ENCODE measurements at regions of chr5 and their contacts with region 1.

Region 1: DNA sequence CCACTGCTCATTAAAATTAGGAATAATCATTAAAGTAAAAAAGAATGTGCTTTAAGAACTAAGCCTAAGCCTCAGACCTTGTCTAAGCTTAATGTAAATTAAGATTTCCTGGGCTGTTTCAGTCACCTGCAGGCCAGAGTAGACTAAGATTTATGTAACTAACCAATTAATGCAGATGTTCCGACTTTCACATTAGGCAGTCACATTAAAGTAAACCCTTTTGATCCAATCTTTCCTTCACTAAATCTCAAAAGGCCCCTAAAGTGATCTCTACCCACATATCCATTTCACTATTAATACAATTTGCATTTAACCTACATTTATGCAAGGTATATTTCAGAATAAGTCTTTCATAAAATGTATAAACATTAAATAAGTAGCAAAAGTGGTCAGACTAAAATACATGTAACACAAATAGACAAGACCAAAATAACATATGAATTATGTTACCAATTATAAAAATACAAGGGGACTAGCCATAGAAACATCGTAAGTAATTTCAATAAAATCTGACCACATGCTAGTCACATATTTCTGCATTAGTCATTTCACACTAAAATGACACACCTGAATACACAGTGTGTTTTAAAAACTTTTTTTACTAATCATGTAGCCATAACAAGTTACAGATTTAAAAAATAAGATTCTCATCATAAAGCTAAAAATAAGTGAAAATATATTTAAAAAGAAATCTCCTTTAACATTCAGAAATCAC is 7.7 kb downstream of the NR3C1 start:
- DNase-seq: no peak
- ATAC-seq: no peak
- H3K4me3 ChIP-seq: peak overlapping the region in 2 of 5 experiments; percentile 12 to 32
- H3K4me3 Mint-ChIP-seq: peak overlapping the region; percentile 88
- H3K27ac ChIP-seq: peak overlapping the region in 1 of 2 donors; percentile 4
- H3K27ac Mint-ChIP-seq: no peak overlapping the region
- H3K4me1 ChIP-seq: peaks cover 24 to 79% of the 10 kb centered on the region in 2 donors
- H3K4me1 Mint-ChIP-seq: peaks cover 61% of the 10 kb centered on the region
- H3K27me3 ChIP-seq: no peaks in the 10 kb centered on the region
- H3K27me3 Mint-ChIP-seq: no peaks in the 10 kb centered on the region
- CTCF ChIP-seq: no peak

Region 2: DNA sequence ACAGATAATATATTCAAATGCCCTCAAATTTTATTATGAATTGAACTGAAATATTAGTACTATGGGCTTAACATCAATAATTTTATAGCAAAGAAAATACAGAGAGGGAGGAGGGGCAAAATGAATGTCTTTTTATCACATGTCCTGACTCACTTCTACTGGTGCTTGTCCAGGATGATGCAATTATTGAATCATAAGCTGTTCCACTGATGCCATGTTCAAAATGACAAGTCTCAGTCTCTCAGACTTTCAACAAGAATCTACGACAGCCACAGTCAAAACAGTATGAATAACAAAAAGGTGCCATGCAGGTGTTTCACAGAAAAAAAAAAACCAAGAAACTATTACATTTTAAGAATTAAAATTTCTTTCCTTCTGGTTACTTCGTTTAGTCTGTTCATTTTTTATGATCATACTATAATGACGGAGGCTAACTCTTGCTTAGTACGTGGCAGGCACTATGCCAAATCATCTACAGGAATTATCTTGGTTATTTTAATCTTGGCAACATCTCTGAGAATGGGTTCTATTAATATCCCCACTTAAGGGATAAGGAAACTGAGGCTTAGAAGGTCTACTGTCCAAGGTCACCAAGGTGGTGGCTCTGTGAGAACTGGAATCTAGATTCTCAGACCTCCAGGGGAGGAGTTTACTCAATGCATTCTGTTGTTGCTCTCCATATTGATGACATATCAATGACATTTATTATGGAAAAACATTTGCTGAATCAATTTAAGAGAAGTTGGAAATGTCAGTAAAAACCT is 53.8 kb before region 1 on chr5:
- CTCF ChIA-PET with region 1: no interaction called
- POLR2A ChIA-PET with region 1: no interaction called
- intact Hi-C with region 1: loop called (anchors 10 kb)
- DNase-seq: no peak
- ATAC-seq: no peak
- H3K4me3 ChIP-seq: no peak overlapping the region
- H3K4me3 Mint-ChIP-seq: no peak overlapping the region
- H3K27ac ChIP-seq: no peak overlapping the region
- H3K27ac Mint-ChIP-seq: no peak overlapping the region
- H3K4me1 ChIP-seq: peaks cover 4 to 12% of the 10 kb centered on the region in 2 donors
- H3K4me1 Mint-ChIP-seq: peaks cover 45% of the 10 kb centered on the region
- H3K27me3 ChIP-seq: no peaks in the 10 kb centered on the region
- H3K27me3 Mint-ChIP-seq: no peaks in the 10 kb centered on the region
- CTCF ChIP-seq: no peak

Region 3: DNA sequence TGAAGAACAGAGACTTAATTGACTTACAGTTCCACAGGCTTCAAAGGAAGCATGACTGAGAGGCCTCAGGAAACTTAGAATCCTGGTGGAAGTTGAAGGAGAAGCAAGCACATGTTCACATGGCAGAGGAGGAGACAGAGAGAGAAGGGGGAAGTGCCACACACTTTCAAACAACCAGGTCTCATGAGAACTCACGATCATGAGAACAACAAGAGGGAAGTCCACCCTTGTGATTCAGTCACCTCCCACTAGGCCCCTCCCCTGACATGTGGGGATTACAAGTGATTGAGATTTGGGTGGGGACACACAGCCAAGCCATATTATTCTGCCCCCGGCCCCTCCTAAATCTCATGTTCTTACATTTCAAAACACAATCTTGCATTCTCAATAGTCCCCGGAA is 11.8 kb before region 1 on chr5:
- CTCF ChIA-PET with region 1: interaction called, 3 read pairs
- POLR2A ChIA-PET with region 1: no interaction called
- intact Hi-C with region 1: loop called (anchors 2 kb)
- DNase-seq: no peak
- ATAC-seq: no peak
- H3K4me3 ChIP-seq: no peak overlapping the region
- H3K4me3 Mint-ChIP-seq: no peak overlapping the region
- H3K27ac ChIP-seq: no peak overlapping the region
- H3K27ac Mint-ChIP-seq: no peak overlapping the region
- H3K4me1 ChIP-seq: peaks cover 4 to 17% of the 10 kb centered on the region in 2 donors
- H3K4me1 Mint-ChIP-seq: peaks cover 76% of the 10 kb centered on the region
- H3K27me3 ChIP-seq: no peaks in the 10 kb centered on the region
- H3K27me3 Mint-ChIP-seq: no peaks in the 10 kb centered on the region
- CTCF ChIP-seq: no peak

Region 4: GRCh38 chr5:143576711-143577484 is 181.1 kb after region 1 on chr5:
- CTCF ChIA-PET with region 1: no interaction called
- POLR2A ChIA-PET with region 1: no interaction called
- intact Hi-C with region 1: no loop called
- DNase-seq: no peak
- ATAC-seq: no peak
- H3K4me3 ChIP-seq: no peak overlapping the region
- H3K4me3 Mint-ChIP-seq: no peak overlapping the region
- H3K27ac ChIP-seq: no peak overlapping the region
- H3K27ac Mint-ChIP-seq: no peak overlapping the region
- H3K4me1 ChIP-seq: peaks cover 0 to 5% of the 10 kb centered on the region in 2 donors
- H3K4me1 Mint-ChIP-seq: peaks cover 12% of the 10 kb centered on the region
- H3K27me3 ChIP-seq: no peaks in the 10 kb centered on the region
- H3K27me3 Mint-ChIP-seq: no peaks in the 10 kb centered on the region
- CTCF ChIP-seq: no peak